ENCODE measurements at regions of chr5 and their contacts with region 1.

Region 1: GRCh38 chr5:144284931-144285502 is 114.3 kb downstream of the KCTD16 start:
- DNase-seq: no peak
- H3K4me3 ChIP-seq: no peak overlapping the region
- H3K4me3 Mint-ChIP-seq: no peak overlapping the region
- H3K27ac Mint-ChIP-seq: no peak overlapping the region
- H3K4me1 ChIP-seq: peaks cover 29% of the 10 kb centered on the region
- H3K4me1 Mint-ChIP-seq: peaks cover 19% of the 10 kb centered on the region
- H3K27me3 ChIP-seq: no peaks in the 10 kb centered on the region
- H3K27me3 Mint-ChIP-seq: no peaks in the 10 kb centered on the region
- CTCF ChIP-seq: no peak

Region 2: GRCh38 chr5:144308906-144309670 is 24.1 kb after region 1 on chr5:
- CTCF ChIA-PET with region 1: no interaction called
- POLR2A ChIA-PET with region 1: interaction called, 3 read pairs
- intact Hi-C with region 1: loop called (anchors 1 kb)
- DNase-seq: peak; percentile 38 to 45
- H3K4me3 ChIP-seq: no peak overlapping the region
- H3K4me3 Mint-ChIP-seq: no peak overlapping the region
- H3K27ac Mint-ChIP-seq: no peak overlapping the region
- H3K4me1 ChIP-seq: peaks cover 31% of the 10 kb centered on the region
- H3K4me1 Mint-ChIP-seq: peaks cover 15% of the 10 kb centered on the region
- H3K27me3 ChIP-seq: no peaks in the 10 kb centered on the region
- H3K27me3 Mint-ChIP-seq: no peaks in the 10 kb centered on the region
- CTCF ChIP-seq: no peak

Region 3: GRCh38 chr5:144315994-144316634 is 31.1 kb after region 1 on chr5:
- CTCF ChIA-PET with region 1: no interaction called
- POLR2A ChIA-PET with region 1: no interaction called
- intact Hi-C with region 1: loop called (anchors 2 kb)
- DNase-seq: peak; percentile 45 to 47
- H3K4me3 ChIP-seq: no peak overlapping the region
- H3K4me3 Mint-ChIP-seq: no peak overlapping the region
- H3K27ac Mint-ChIP-seq: peak overlapping the region; percentile 18
- H3K4me1 ChIP-seq: peaks cover 10% of the 10 kb centered on the region
- H3K4me1 Mint-ChIP-seq: no peaks in the 10 kb centered on the region
- H3K27me3 ChIP-seq: no peaks in the 10 kb centered on the region
- H3K27me3 Mint-ChIP-seq: no peaks in the 10 kb centered on the region
- CTCF ChIP-seq: no peak

Region 4: GRCh38 chr5:144467792-144468191 is 182.8 kb after region 1 on chr5:
- CTCF ChIA-PET with region 1: no interaction called
- POLR2A ChIA-PET with region 1: no interaction called
- intact Hi-C with region 1: loop called (anchors 10 kb)
- DNase-seq: peak; percentile 43 to 60
- H3K4me3 ChIP-seq: no peak overlapping the region
- H3K4me3 Mint-ChIP-seq: no peak overlapping the region
- H3K27ac Mint-ChIP-seq: no peak overlapping the region
- H3K4me1 ChIP-seq: no peaks in the 10 kb centered on the region
- H3K4me1 Mint-ChIP-seq: peaks cover 6% of the 10 kb centered on the region
- H3K27me3 ChIP-seq: no peaks in the 10 kb centered on the region
- H3K27me3 Mint-ChIP-seq: no peaks in the 10 kb centered on the region
- CTCF ChIP-seq: peak; percentile 34 to 73

Region 5: DNA sequence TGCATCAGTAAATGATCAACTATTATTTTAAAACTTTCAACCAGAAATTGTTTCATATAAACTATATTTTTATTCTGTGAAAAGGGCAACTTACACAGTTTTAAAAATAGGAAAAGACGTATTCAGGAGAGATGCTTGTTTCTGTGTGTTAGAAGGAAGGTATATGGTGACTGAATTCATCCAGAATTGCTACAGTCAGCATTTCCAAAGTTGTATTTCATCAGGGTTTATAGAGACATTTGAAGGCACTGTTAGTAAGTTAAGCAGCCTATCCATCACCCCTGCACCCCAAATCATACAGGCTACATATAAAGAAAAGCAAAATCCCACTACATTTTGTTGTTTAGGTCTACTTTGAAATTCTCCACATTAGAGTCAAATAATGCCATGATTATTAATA is 601.7 kb after region 1 on chr5:
- CTCF ChIA-PET with region 1: no interaction called
- POLR2A ChIA-PET with region 1: no interaction called
- intact Hi-C with region 1: no loop called
- DNase-seq: no peak
- H3K4me3 ChIP-seq: no peak overlapping the region
- H3K4me3 Mint-ChIP-seq: no peak overlapping the region
- H3K27ac Mint-ChIP-seq: no peak overlapping the region
- H3K4me1 ChIP-seq: no peaks in the 10 kb centered on the region
- H3K4me1 Mint-ChIP-seq: no peaks in the 10 kb centered on the region
- H3K27me3 ChIP-seq: no peaks in the 10 kb centered on the region
- H3K27me3 Mint-ChIP-seq: no peaks in the 10 kb centered on the region
- CTCF ChIP-seq: no peak